ENCODE measurements at regions of chr12 and their contacts with region 1.

Region 1: DNA sequence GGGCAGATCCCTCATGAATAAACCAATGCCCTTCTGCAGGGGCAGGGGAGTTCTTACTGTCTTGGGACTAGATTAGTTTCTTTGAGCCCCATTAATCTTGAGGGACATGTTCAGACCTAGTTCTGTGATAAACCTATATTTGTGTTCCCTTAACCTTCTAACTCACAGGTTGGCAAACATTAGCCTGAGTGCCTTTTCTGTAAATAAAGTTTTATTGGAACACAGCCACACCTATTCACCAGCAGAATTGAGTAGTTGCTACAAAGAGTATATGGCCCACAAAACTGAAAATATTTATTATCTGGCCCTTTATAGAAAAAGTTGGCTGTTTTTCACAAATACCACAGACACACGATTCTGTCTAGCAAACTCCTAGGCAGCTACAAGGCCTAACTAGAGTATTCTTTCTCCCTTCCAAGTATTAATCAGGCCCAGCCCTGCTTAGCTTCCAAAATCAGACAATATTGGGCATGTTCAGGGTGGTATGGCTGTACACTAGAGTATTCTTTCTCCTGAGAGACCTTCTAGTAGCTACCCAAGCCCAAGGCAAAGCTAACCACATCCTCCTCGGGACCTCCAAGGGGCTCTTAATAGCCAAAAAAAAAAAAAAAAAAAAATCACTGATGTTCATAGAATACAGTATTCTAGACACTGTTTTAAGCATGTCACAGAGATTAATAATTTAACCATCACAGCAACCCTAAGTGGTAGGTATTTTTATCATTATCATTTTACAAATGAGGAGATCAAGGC is 199.3 kb upstream of the PWP1 start:
- DNase-seq: no peak
- H3K4me3 ChIP-seq: no peak overlapping the region
- H3K27ac ChIP-seq: no peak overlapping the region
- H3K4me1 ChIP-seq: no peaks in the 10 kb centered on the region
- H3K27me3 ChIP-seq: no peaks in the 10 kb centered on the region
- CTCF ChIP-seq: no peak

Region 2: GRCh38 chr12:107448198-107448597 is 38.1 kb before region 1 on chr12:
- CTCF ChIA-PET with region 1: interaction called, 10 read pairs
- POLR2A ChIA-PET with region 1: no interaction called
- intact Hi-C with region 1: no loop called
- DNase-seq: no peak
- H3K4me3 ChIP-seq: no peak overlapping the region
- H3K27ac ChIP-seq: no peak overlapping the region
- H3K4me1 ChIP-seq: peaks cover 18% of the 10 kb centered on the region
- H3K27me3 ChIP-seq: no peaks in the 10 kb centered on the region
- CTCF ChIP-seq: peak; percentile 52; the same call in 1 of the 2 replicates

Region 3: DNA sequence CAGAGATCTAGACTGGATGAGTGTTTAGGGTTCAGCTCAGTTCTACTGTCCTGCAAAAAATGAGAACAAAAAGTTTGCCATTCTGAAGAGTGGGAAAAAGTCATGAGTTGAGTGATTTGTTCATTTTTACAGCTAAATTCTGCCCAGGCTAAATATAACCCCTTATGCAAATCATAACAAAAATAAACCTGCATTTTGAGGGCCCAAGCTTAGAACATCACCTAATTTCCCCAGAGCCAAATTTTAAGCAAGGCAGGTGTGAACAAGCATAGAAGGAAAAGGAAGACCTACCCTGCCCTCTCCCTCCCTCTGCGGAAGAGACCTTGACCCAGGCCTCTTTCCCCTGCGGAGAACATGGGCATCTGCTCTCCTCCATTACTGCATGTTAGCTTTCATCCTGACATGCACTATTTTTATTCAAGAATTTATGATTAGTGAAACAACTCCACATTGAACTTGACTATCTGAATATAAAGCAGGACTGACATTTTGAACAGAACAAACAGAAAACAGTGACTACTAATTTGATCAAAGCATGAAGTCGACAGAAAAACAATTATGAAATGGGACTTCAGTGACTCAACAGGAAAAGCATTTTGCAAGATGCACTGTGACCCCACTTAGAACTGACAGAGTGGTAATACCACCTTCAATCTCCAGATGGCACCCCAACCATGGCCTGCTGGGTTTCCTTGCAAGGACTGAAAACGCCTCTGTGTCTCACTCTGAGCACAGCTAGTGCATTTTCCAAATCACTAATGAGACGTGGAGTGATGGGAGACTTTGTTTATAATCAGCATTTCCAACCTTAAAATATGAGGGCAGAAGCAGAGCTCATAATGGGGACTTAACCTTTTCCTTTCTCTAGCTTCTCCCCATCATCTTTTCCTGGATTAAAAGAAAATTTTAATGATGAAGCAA is 1178.3 kb after region 1 on chr12:
- CTCF ChIA-PET with region 1: no interaction called
- POLR2A ChIA-PET with region 1: no interaction called
- intact Hi-C with region 1: no loop called
- DNase-seq: peak; percentile 84 to 88
- H3K4me3 ChIP-seq: no peak overlapping the region
- H3K27ac ChIP-seq: peak overlapping the region; percentile 51
- H3K4me1 ChIP-seq: peaks cover 7% of the 10 kb centered on the region
- H3K27me3 ChIP-seq: no peaks in the 10 kb centered on the region
- CTCF ChIP-seq: peak; percentile 95